HepG2 (cell line): ENCODE measurements at regions of chr9 and their contacts with region 1.

Region 1: DNA sequence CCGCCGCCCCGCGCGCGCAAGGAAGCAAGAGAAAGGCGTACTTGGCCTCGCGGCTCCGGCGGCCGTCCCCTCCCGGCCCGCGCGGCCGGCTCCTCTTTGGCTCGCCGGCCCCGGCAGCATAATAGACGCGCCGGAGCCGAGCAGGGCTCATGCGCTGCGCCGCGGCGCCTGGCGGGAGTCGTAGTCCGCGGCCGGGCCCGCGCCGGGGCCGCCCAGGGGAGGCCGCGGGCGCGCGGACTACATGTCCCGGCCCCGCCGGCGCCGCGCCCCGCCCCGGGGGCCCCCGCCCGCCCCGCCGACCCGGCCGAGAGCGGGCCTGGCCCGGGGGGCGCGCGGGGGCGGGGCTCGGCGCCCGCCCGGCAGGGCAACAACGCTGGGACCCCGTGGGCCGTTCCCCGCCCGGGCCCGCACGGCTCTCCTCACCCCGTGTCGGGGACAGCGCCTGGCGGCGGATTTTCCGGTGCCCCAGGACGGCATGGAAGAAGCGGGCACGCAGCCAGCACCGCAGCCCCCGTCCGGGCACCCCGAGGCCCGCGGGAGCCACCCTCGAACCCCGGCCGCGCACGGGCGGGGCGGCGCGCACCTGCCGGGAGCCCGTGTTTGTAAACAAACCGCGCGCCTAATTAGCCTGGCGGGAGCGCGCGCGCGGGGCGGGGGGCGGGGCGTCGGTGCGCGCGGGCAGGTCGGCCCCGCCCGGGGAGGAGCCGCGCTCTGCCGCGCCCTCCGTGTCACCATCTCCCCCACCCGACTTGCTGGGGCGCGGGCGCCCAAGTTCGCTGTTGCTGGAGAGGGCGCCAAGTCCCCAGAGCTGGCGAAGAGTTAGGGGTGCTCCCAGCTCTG is at the start of gene BRD3:
- DNase-seq: peak; percentile 71
- ATAC-seq: peak; percentile 76
- H3K4me3 ChIP-seq: peak within 1 kb of the TSS; percentile 83 to 97 (median 83)
- H3K27ac ChIP-seq: peak within 1 kb of the TSS; percentile 82
- H3K4me1 ChIP-seq: peaks cover 39% of the 10 kb centered on the region
- H3K27me3 ChIP-seq: peaks cover 9 to 38% of the 10 kb centered on the region in 2 experiments; a peak in 4 of 5 replicates
- CTCF ChIP-seq: peak; percentile 49
- EP300 ChIP-seq: no peak
- POLR2A ChIP-seq: peak in 1 of 2 experiments; percentile 60; a peak in 2 of 4 replicates
- RAD21 ChIP-seq: peak; percentile 63; the same call in 1 of the 2 replicates
- total RNA-seq, gene BRD3: 5.9 and 11.2 TPM in 2 replicates

Region 2: GRCh38 chr9:134024828-134025605 is 43.1 kb before region 1 on chr9 and contains the start of gene BRD3OS:
- CTCF ChIA-PET with region 1: no interaction called
- POLR2A ChIA-PET with region 1: interaction called, 4 read pairs
- in situ Hi-C with region 1: no loop called
- intact Hi-C with region 1: loop called (anchors 5 kb)
- DNase-seq: peak; percentile 88
- ATAC-seq: peak; percentile 91
- H3K4me3 ChIP-seq: peak within 1 kb of the TSS; percentile 75 to 85 (median 77)
- H3K27ac ChIP-seq: no peak within 1 kb of the TSS
- H3K4me1 ChIP-seq: peaks cover 29% of the 10 kb centered on the region
- H3K27me3 ChIP-seq: no peaks in the 10 kb centered on the region
- CTCF ChIP-seq: no peak
- EP300 ChIP-seq: no peak; a peak in 1 of 4 replicates
- POLR2A ChIP-seq: no peak
- RAD21 ChIP-seq: no peak
- total RNA-seq, gene BRD3OS: 4.9 and 5.0 TPM in 2 replicates

Region 3: GRCh38 chr9:134158753-134159392 is 90.7 kb after region 1 on chr9:
- CTCF ChIA-PET with region 1: no interaction called
- POLR2A ChIA-PET with region 1: no interaction called
- in situ Hi-C with region 1: no loop called
- intact Hi-C with region 1: no loop called
- DNase-seq: no peak
- ATAC-seq: no peak
- H3K4me3 ChIP-seq: no peak overlapping the region
- H3K27ac ChIP-seq: no peak overlapping the region
- H3K4me1 ChIP-seq: no peaks in the 10 kb centered on the region; the same call in 1 of the 2 replicates
- H3K27me3 ChIP-seq: no peaks in the 10 kb centered on the region
- CTCF ChIP-seq: no peak
- EP300 ChIP-seq: no peak
- POLR2A ChIP-seq: no peak
- RAD21 ChIP-seq: no peak

Region 4: DNA sequence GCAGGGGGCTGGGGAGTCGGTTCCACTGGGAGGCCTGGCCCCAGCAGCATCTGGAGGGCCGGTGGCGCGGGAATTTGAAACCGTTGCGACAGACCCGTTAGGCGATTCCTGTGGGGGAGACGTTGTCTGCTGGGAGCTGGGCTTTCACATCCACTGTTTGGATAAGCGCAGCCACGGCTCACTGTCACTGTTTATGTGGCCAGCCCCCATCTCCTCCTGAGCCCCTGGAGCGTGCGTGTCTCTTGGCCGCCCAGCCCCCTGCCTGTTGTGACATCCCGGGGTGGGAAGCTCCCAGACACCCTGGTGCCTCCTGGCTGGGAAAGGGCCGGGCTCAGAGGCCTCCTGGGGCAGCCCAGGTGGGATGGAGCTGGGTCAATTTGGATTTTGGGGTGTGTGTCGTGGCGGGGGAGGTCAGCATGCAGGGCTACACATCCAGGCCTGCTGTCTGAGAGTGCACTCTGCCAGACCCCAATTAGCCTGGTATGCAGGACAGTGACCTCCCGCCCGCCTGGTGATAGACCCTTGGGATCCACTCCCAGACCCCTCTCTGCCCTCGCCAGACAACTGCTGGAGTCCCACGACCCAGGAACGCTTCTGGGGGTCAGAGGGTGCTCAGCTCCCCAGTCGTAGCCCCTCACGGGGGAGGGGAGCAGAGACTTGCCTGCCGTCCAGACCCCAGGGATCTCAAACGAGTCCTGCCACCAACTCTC is 158.3 kb after region 1 on chr9:
- CTCF ChIA-PET with region 1: no interaction called
- POLR2A ChIA-PET with region 1: no interaction called
- in situ Hi-C with region 1: no loop called
- intact Hi-C with region 1: no loop called
- DNase-seq: peak; percentile 83
- ATAC-seq: peak; percentile 62
- H3K4me3 ChIP-seq: peak overlapping the region in 1 of 3 experiments; percentile 9; a peak in 1 of 6 replicates
- H3K27ac ChIP-seq: no peak overlapping the region
- H3K4me1 ChIP-seq: peaks cover 73% of the 10 kb centered on the region
- H3K27me3 ChIP-seq: peaks cover 20 to 64% of the 10 kb centered on the region in 2 experiments
- CTCF ChIP-seq: no peak
- EP300 ChIP-seq: peak in 1 of 2 experiments; percentile 37; a peak in 1 of 4 replicates
- POLR2A ChIP-seq: no peak
- RAD21 ChIP-seq: no peak

Region 5: GRCh38 chr9:134339183-134339806 is 271.2 kb after region 1 on chr9:
- CTCF ChIA-PET with region 1: no interaction called
- POLR2A ChIA-PET with region 1: no interaction called
- in situ Hi-C with region 1: loop called (anchors 10 kb)
- intact Hi-C with region 1: no loop called
- DNase-seq: no peak
- ATAC-seq: no peak
- H3K4me3 ChIP-seq: no peak overlapping the region
- H3K27ac ChIP-seq: peak overlapping the region; percentile 30
- H3K4me1 ChIP-seq: peaks cover 57% of the 10 kb centered on the region
- H3K27me3 ChIP-seq: no peaks in the 10 kb centered on the region
- CTCF ChIP-seq: no peak
- EP300 ChIP-seq: no peak
- POLR2A ChIP-seq: no peak
- RAD21 ChIP-seq: no peak